Endothelial cell of umbilical vein (primary cell): ENCODE measurements at regions of chr7 and their contacts with region 1.

Region 1: DNA sequence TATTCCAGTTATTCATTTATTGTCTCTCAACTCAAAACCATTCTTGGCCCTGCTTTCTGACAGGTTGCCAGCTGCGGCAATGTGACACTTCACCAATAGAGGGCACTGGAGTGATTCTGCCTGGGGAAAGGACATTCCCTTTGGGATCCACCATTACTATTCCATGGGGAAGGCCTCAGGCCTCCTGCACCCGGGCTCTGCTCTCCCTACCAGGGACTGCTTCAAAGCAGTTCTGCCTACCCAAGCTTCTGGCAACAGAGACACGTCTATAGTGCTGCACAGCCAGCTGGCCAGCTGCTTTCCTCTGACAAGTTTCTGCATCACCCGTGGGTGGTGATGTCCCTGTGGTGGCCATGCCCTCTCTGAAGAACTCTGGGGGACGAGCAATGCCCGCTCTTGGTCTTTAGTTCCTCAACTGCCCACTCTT is 163.8 kb downstream of the ELMO1 start:
- DNase-seq: peak; percentile 80
- H3K4me3 ChIP-seq: no peak overlapping the region
- H3K27ac ChIP-seq: no peak overlapping the region
- H3K4me1 ChIP-seq: peaks cover 8% of the 10 kb centered on the region
- H3K27me3 ChIP-seq: no peaks in the 10 kb centered on the region
- CTCF ChIP-seq: peak; percentile 84 to 90
- POLR2A ChIP-seq: no peak

Region 2: DNA sequence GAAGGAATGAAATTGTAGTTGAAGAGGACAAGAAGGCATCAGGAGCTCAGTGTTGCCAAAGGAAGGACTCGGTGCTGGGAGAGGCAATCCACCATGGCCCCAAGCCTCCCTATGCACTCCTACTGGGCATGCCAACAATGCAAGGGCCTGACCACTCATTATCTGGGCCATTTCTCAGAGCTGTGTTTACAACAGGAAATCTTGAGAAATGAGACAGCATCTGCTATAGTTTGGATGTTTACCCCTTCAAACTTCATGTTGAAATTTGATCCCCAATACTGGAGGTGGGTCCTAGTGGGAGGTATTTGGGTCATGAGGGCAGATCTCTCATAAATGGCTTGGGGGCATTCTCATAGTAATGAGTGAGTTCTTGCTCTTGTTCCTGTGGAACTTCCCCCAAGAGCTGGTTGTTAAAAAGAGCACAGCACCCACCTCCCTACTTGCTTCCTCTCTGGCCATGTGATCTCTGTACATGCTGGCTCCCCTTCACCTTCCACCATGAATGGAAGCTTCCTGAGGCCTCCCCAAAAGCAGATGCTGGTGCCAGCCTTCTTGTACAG is 509.7 kb before region 1 on chr7:
- CTCF ChIA-PET with region 1: no interaction called
- POLR2A ChIA-PET with region 1: no interaction called
- dilution Hi-C with region 1: no loop called
- intact Hi-C with region 1: no loop called
- DNase-seq: no peak
- H3K4me3 ChIP-seq: no peak overlapping the region
- H3K27ac ChIP-seq: no peak overlapping the region
- H3K4me1 ChIP-seq: no peaks in the 10 kb centered on the region
- H3K27me3 ChIP-seq: no peaks in the 10 kb centered on the region
- CTCF ChIP-seq: no peak
- POLR2A ChIP-seq: no peak

Region 3: DNA sequence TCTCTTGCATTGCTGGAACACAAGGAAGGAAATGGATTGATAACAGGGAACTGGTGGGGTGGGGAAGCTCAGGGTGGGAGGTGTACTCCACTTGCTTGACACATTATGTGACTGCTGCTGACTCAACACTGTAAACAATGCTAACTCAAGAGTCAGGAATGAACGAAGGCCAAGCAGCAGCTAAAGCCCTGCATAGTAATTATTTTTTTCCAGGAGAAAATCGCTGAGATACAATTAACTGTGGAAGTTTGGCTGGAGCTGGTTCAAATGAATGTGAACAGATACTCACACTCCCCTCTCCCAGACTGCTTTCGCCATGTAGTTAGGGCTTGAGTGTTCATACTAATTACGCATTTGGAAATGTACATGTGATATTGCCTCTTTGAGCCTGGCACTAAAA is 389.6 kb before region 1 on chr7:
- CTCF ChIA-PET with region 1: no interaction called
- POLR2A ChIA-PET with region 1: no interaction called
- dilution Hi-C with region 1: no loop called
- intact Hi-C with region 1: no loop called
- DNase-seq: peak; percentile 12
- H3K4me3 ChIP-seq: no peak overlapping the region
- H3K27ac ChIP-seq: no peak overlapping the region
- H3K4me1 ChIP-seq: no peaks in the 10 kb centered on the region
- H3K27me3 ChIP-seq: no peaks in the 10 kb centered on the region
- CTCF ChIP-seq: no peak
- POLR2A ChIP-seq: no peak

Region 4: GRCh38 chr7:37208528-37208927 is 76.3 kb before region 1 on chr7:
- CTCF ChIA-PET with region 1: interaction called, 4 read pairs
- POLR2A ChIA-PET with region 1: no interaction called
- dilution Hi-C with region 1: no loop called
- intact Hi-C with region 1: loop called (anchors 1 kb)
- DNase-seq: peak; percentile 73
- H3K4me3 ChIP-seq: no peak overlapping the region
- H3K27ac ChIP-seq: no peak overlapping the region
- H3K4me1 ChIP-seq: no peaks in the 10 kb centered on the region
- H3K27me3 ChIP-seq: no peaks in the 10 kb centered on the region
- CTCF ChIP-seq: peak; percentile 31 to 61
- POLR2A ChIP-seq: no peak

Region 5: DNA sequence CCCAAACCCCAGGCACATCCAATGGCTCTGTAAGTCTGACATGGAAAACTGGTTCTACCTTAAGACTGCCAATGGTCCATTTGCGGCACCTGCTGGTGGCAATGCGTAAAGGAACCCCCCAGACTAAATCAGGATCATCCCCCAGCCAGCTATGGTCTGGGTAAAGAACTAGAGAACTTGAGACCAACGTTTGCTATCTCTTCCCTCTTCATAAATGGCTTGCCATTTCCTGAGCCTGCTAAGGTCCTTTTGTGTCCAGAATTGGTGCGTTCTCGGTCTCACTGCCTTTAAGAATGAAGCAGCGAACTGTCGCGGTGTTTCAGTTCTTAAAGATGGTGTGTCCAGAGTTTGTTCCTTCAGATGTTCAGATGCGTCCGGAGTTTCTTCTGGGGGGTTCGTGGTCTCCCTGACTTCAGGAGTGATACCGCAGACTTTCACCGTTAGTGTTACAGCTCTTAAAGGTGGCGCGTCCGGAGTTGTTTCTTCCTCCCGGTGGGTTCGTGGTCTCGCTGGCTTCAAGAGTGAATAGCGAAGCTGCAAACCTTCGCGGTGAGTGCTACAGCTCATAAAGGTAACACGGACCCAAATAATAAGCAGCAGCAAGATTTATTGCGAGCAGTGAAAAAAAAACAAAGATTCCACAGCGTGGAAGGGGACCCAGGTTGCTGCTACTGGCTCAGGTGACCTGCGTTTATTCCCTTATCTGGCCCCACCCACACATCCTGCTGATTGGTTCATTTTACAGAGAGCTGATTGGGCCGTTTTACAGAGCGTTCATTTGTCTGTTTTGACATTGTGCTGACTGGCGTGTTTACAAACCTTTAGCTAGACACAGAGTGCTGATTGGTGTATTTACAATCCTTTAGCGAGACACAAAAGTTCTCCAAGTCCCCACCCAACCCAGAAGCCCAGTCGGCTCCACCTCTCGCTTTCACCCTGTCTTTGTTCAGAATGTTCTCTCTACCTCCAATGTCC is 68.4 kb after region 1 on chr7:
- CTCF ChIA-PET with region 1: interaction called, 18 read pairs
- POLR2A ChIA-PET with region 1: no interaction called
- dilution Hi-C with region 1: no loop called
- intact Hi-C with region 1: loop called (anchors 2 kb)
- DNase-seq: no peak
- H3K4me3 ChIP-seq: no peak overlapping the region
- H3K27ac ChIP-seq: peak overlapping the region; percentile 66
- H3K4me1 ChIP-seq: peaks cover 21% of the 10 kb centered on the region
- H3K27me3 ChIP-seq: no peaks in the 10 kb centered on the region
- CTCF ChIP-seq: peak; percentile 6 to 11
- POLR2A ChIP-seq: no peak

Region 6: DNA sequence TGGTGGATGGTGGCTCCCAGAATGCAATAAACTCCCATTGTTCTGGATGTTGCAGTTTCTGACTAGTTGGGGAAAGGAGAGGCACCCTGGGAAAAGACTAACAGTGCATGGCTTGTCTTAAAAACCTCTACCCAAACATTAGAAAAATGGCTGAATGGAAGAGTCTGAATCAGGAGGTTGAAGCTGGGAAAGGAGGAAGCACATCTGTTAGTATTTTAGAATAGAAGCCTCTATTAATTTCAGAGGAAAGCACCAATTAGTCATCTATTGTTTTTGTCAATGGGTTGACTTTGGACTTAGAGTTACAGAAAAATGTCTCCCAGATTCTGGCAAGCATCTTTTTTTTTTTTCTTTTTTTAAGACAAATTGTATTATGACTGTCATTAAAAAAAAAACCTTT is 220.0 kb after region 1 on chr7:
- CTCF ChIA-PET with region 1: interaction called, 94 read pairs
- POLR2A ChIA-PET with region 1: no interaction called
- dilution Hi-C with region 1: no loop called
- intact Hi-C with region 1: no loop called
- DNase-seq: peak; percentile 79
- H3K4me3 ChIP-seq: no peak overlapping the region
- H3K27ac ChIP-seq: no peak overlapping the region
- H3K4me1 ChIP-seq: peaks cover 7% of the 10 kb centered on the region
- H3K27me3 ChIP-seq: peaks cover 9 to 11% of the 10 kb centered on the region in 2 experiments
- CTCF ChIP-seq: no peak
- POLR2A ChIP-seq: no peak

Region 7: DNA sequence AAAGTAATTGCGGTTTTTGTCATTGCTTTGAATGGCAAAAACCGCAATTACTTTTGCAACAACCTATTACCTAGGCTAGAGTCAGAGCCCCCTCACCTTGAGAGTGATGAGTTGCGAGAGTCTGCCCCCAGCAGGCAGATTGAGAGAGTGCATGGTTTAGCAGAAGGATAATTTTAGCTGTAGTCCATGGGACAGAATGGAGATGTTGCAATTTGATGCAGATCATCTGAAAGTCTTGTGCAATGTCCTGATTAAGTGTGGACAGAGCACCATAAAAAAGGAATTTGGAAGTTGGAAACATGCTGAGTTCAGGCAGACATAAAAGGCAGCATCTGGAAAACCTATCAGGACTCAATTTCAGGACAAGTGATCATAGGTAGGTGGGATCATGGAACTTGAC is 447.4 kb after region 1 on chr7:
- CTCF ChIA-PET with region 1: interaction called, 3 read pairs
- POLR2A ChIA-PET with region 1: no interaction called
- dilution Hi-C with region 1: no loop called
- intact Hi-C with region 1: loop called (anchors 2 kb)
- DNase-seq: peak; percentile 25
- H3K4me3 ChIP-seq: no peak overlapping the region
- H3K27ac ChIP-seq: no peak overlapping the region
- H3K4me1 ChIP-seq: no peaks in the 10 kb centered on the region
- H3K27me3 ChIP-seq: peaks cover 2 to 3% of the 10 kb centered on the region in 2 experiments
- CTCF ChIP-seq: peak; percentile 28 to 58
- POLR2A ChIP-seq: no peak

Region 8: GRCh38 chr7:37815671-37816371 is 531.0 kb after region 1 on chr7:
- CTCF ChIA-PET with region 1: no interaction called
- POLR2A ChIA-PET with region 1: no interaction called
- dilution Hi-C with region 1: no loop called
- intact Hi-C with region 1: no loop called
- DNase-seq: no peak
- H3K4me3 ChIP-seq: no peak overlapping the region
- H3K27ac ChIP-seq: no peak overlapping the region
- H3K4me1 ChIP-seq: no peaks in the 10 kb centered on the region
- H3K27me3 ChIP-seq: peaks cover 0 to 3% of the 10 kb centered on the region in 2 experiments
- CTCF ChIP-seq: no peak
- POLR2A ChIP-seq: no peak